ENCODE measurements at regions of chr6 and their contacts with region 1.

Region 1: GRCh38 chr6:33276864-33277662 is at the start of gene B3GALT4:
- DNase-seq: peak; percentile 88
- ATAC-seq: peak; percentile 72
- H3K4me3 ChIP-seq: peak within 1 kb of the TSS; percentile 59 to 86 (median 78)
- H3K4me3 Mint-ChIP-seq: peak within 1 kb of the TSS; percentile 92
- H3K27ac ChIP-seq: peak within 1 kb of the TSS; percentile 80 to 87
- H3K27ac Mint-ChIP-seq: peak within 1 kb of the TSS; percentile 98
- H3K4me1 ChIP-seq: peaks cover 55 to 69% of the 10 kb centered on the region in 2 donors
- H3K4me1 Mint-ChIP-seq: peaks cover 69% of the 10 kb centered on the region
- H3K27me3 ChIP-seq: no peaks in the 10 kb centered on the region
- H3K27me3 Mint-ChIP-seq: no peaks in the 10 kb centered on the region
- CTCF ChIP-seq: peak; percentile 75
- total RNA-seq, gene B3GALT4: 44.1 and 46.0 TPM in 2 replicates

Region 2: GRCh38 chr6:33288921-33289748 is 12.1 kb after region 1 on chr6 and contains the starts of genes PFDN6 and WDR46:
- CTCF ChIA-PET with region 1: interaction called, 17 read pairs
- POLR2A ChIA-PET with region 1: interaction called, 39 read pairs
- intact Hi-C with region 1: loop called (anchors 1 kb)
- DNase-seq: peak; percentile 93
- ATAC-seq: peak; percentile 96
- H3K4me3 ChIP-seq: peak within 1 kb of the TSS; percentile 78 to 99 (median 86)
- H3K4me3 Mint-ChIP-seq: peak within 1 kb of the TSS; percentile 93
- H3K27ac ChIP-seq: peak within 1 kb of the TSS; percentile 42 to 68
- H3K27ac Mint-ChIP-seq: peak within 1 kb of the TSS; percentile 86
- H3K4me1 ChIP-seq: peaks cover 19 to 25% of the 10 kb centered on the region in 2 donors
- H3K4me1 Mint-ChIP-seq: peaks cover 38% of the 10 kb centered on the region
- H3K27me3 ChIP-seq: no peaks in the 10 kb centered on the region
- H3K27me3 Mint-ChIP-seq: no peaks in the 10 kb centered on the region
- CTCF ChIP-seq: no peak
- total RNA-seq, gene PFDN6: 44.7 and 51.1 TPM in 2 replicates
- total RNA-seq, gene WDR46: 66.4 and 77.2 TPM in 2 replicates

Region 3: DNA sequence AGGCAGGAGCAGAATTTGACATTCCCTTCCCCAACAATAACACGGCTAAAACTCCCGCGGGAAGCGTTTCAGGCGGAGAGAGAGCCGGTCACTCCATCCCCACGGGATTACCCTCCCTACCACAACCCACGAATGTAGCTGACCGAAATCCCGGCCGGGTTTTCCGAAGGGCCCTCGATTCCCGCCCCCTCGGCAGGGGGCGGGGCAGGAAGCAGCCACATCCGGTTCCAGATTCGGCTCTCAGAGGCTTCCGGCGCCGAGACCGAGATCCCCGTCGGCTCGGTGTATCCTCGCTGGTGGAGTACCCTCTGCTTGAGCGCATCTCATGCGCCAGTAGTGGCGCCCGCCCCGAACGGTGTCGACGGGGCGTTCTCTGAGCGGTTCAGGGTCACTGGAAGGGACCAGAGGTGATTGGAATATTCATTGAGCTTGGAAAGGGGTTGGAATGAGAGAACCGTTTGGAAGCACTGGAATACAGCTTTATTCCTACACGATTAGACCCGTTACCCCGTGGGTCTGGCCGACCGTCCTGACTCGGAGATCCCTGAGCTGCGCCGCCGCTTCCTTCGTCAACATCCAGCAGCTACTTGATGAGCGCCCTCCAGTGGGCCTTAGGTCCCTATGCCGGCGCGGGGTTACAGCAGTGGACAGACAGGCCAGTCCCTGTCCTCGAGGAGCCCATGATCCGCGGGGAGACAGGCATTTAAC is 22.3 kb after region 1 on chr6:
- CTCF ChIA-PET with region 1: interaction called, 32 read pairs
- POLR2A ChIA-PET with region 1: interaction called, 19 read pairs
- intact Hi-C with region 1: loop called (anchors 1 kb)
- DNase-seq: peak; percentile 95
- ATAC-seq: peak; percentile 68
- H3K4me3 ChIP-seq: peak overlapping the region; percentile 71 to 96 (median 79)
- H3K4me3 Mint-ChIP-seq: peak overlapping the region; percentile 99
- H3K27ac ChIP-seq: peak overlapping the region; percentile 86 to 91
- H3K27ac Mint-ChIP-seq: peak overlapping the region; percentile 99
- H3K4me1 ChIP-seq: peaks cover 12 to 24% of the 10 kb centered on the region in 2 donors
- H3K4me1 Mint-ChIP-seq: peaks cover 38% of the 10 kb centered on the region
- H3K27me3 ChIP-seq: no peaks in the 10 kb centered on the region
- H3K27me3 Mint-ChIP-seq: no peaks in the 10 kb centered on the region
- CTCF ChIP-seq: peak; percentile 69

Region 4: DNA sequence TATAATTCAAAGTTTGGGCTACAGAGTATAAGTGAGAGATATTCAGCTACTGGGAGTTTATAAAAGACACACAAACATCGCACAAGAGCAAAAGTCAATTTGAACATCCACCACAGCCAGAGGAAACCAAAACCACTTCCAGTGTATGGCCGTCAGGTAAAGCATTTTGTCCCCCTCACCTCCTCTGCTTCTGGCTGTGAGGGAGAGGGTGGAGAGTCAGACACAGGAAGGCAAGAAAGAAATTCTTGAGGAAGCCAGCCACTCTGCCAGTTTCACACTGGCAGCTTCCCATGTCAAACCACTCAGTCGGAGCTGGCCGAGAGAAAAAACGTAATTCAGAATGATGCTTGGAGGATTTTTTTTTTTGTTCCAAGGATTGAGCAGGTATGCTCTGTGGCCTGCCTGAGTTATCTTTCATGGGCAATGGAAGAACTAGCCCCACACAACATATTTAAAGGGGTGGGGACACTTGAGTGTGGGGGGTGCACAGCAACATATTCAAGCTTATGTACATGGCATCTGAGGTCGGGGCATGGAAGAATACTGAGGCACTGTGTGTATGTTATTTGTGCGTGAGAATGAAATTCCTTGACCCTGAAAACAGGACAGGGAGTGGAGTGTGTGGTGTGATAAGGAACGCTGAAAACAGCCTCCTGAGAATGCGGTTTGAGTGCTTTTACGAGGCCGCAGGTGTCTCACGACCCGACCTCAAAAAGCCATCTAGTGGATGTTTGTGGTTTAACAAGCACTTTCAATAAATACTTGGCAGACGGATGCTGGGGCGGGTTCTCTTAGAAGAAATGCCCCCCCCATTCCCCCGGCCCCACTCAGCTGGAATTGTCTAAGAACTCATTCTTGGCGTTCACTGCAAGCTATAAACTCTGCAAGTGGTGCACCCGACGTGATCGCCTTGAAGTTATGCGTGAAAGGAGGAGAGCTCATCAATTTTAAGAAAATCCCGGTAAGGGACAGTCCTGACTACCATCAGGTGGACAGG is 67.9 kb after region 1 on chr6:
- CTCF ChIA-PET with region 1: interaction called, 41 read pairs
- POLR2A ChIA-PET with region 1: interaction called, 8 read pairs
- intact Hi-C with region 1: loop called (anchors 1 kb)
- DNase-seq: peak; percentile 91
- ATAC-seq: peak; percentile 31
- H3K4me3 ChIP-seq: peak overlapping the region in 4 of 5 experiments; percentile 13 to 59 (median 42)
- H3K4me3 Mint-ChIP-seq: peak overlapping the region; percentile 81
- H3K27ac ChIP-seq: peak overlapping the region; percentile 92 to 93
- H3K27ac Mint-ChIP-seq: peak overlapping the region; percentile 94
- H3K4me1 ChIP-seq: peaks cover 40 to 50% of the 10 kb centered on the region in 2 donors
- H3K4me1 Mint-ChIP-seq: peaks cover 36% of the 10 kb centered on the region
- H3K27me3 ChIP-seq: no peaks in the 10 kb centered on the region
- H3K27me3 Mint-ChIP-seq: no peaks in the 10 kb centered on the region
- CTCF ChIP-seq: peak; percentile 79

Region 5: GRCh38 chr6:33425668-33426577 is 148.9 kb after region 1 on chr6:
- CTCF ChIA-PET with region 1: interaction called, 15 read pairs
- POLR2A ChIA-PET with region 1: interaction called, 5 read pairs
- intact Hi-C with region 1: no loop called
- DNase-seq: peak; percentile 83
- ATAC-seq: peak; percentile 59
- H3K4me3 ChIP-seq: peak overlapping the region; percentile 48 to 79 (median 62)
- H3K4me3 Mint-ChIP-seq: peak overlapping the region; percentile 92
- H3K27ac ChIP-seq: peak overlapping the region; percentile 78 to 86
- H3K27ac Mint-ChIP-seq: peak overlapping the region; percentile 91
- H3K4me1 ChIP-seq: peaks cover 50 to 56% of the 10 kb centered on the region in 2 donors
- H3K4me1 Mint-ChIP-seq: peaks cover 65% of the 10 kb centered on the region
- H3K27me3 ChIP-seq: no peaks in the 10 kb centered on the region
- H3K27me3 Mint-ChIP-seq: peaks cover 4% of the 10 kb centered on the region
- CTCF ChIP-seq: peak; percentile 25